ENCODE measurements at regions of chr4 and their contacts with region 1.

Region 1: GRCh38 chr4:74320559-74321118 is 12.4 kb downstream of the EPGN start:
- DNase-seq: peak; percentile 98
- ATAC-seq: peak; percentile 95
- H3K4me3 ChIP-seq: peak overlapping the region; percentile 10 to 41; a peak in 3 of 4 replicates
- H3K27ac ChIP-seq: peak overlapping the region; percentile 58
- H3K4me1 ChIP-seq: peaks cover 29 to 61% of the 10 kb centered on the region in 2 experiments
- H3K27me3 ChIP-seq: no peaks in the 10 kb centered on the region
- CTCF ChIP-seq: peak; percentile 59 to 86 (median 71)
- POLR2A ChIP-seq: no peak
- RAD21 ChIP-seq: peak; percentile 96

Region 2: DNA sequence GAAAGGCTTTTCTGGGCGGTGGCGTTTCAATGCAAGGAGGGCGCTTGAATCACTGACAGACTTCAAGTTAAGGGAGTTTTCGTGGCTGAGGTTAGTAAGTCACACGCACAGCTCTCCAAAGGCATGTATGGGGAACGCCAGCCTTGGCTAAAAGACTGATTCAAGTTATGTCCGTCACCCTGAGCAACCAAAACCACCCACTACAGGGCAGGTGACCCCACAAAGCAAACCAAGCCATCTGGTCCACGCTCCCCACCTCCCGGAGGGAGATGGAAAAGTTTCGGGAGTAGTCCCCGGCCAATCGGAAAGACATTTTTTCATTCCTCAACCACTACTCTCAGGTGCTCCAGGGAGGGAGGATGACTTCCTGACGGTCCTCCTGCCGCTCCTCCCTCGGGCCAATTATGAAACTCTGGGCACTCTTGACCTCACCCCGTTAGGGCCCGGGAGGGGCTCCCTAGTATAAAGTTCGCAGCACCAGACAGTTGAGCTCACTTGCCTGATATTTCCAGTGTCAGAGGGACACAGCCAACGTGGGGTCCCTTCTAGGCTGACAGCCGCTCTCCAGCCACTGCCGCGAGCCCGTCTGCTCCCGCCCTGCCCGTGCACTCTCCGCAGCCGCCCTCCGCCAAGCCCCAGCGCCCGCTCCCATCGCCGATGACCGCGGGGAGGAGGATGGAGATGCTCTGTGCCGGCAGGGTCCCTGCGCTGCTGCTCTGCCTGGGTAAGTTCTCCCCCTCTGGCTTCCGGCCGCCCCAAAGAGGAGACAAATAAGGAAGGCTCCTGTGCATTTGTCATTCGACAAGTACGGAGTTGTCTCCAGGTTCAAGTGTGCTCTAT is 44.2 kb after region 1 on chr4 and contains the start of gene EREG:
- CTCF ChIA-PET with region 1: no interaction called
- POLR2A ChIA-PET with region 1: interaction called, 17 read pairs
- RAD21 ChIA-PET with region 1: interaction called, 3 to 4 read pairs
- intact Hi-C with region 1: loop called (anchors 2 kb)
- DNase-seq: peak; percentile 74
- ATAC-seq: peak; percentile 71
- H3K4me3 ChIP-seq: peak within 1 kb of the TSS; percentile 76 to 91
- H3K27ac ChIP-seq: peak within 1 kb of the TSS; percentile 94
- H3K4me1 ChIP-seq: peaks cover 50 to 89% of the 10 kb centered on the region in 2 experiments
- H3K27me3 ChIP-seq: no peaks in the 10 kb centered on the region
- CTCF ChIP-seq: no peak
- POLR2A ChIP-seq: peak; percentile 76
- RAD21 ChIP-seq: no peak
- total RNA-seq, gene EREG: 498 TPM

Region 3: GRCh38 chr4:74397748-74398426 is 77.2 kb after region 1 on chr4:
- CTCF ChIA-PET with region 1: no interaction called
- POLR2A ChIA-PET with region 1: no interaction called
- RAD21 ChIA-PET with region 1: no interaction called
- intact Hi-C with region 1: no loop called
- DNase-seq: no peak
- ATAC-seq: no peak
- H3K4me3 ChIP-seq: no peak overlapping the region
- H3K27ac ChIP-seq: peak overlapping the region; percentile 15; the same call in 1 of the 2 replicates
- H3K4me1 ChIP-seq: peaks cover 26 to 55% of the 10 kb centered on the region in 2 experiments
- H3K27me3 ChIP-seq: no peaks in the 10 kb centered on the region
- CTCF ChIP-seq: no peak
- POLR2A ChIP-seq: no peak
- RAD21 ChIP-seq: no peak

Region 4: DNA sequence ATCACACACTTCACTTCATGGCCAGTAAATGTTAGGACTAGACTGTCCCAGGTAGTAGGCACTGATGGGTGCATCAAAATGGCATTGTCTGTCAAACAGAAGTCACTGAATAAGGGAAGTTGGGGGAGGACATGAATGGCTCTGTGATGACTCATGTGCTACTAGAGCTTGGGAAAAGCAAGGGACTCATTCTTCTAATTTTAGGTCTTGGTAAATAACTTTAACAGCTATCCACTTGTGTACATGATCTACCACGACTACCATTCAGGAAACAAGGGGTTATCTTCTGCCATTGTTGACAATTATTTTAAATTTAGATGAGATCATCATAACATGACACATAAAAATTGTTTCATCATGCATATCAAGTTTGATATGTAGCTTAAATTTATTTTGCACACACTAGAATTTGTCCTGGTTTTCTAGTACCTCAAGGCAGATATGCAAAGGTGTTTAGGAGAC is 130.6 kb after region 1 on chr4:
- CTCF ChIA-PET with region 1: no interaction called
- POLR2A ChIA-PET with region 1: interaction called, 6 read pairs
- RAD21 ChIA-PET with region 1: no interaction called
- intact Hi-C with region 1: loop called (anchors 2 kb)
- DNase-seq: no peak
- ATAC-seq: peak; percentile 48
- H3K4me3 ChIP-seq: no peak overlapping the region; a peak in 1 of 4 replicates
- H3K27ac ChIP-seq: peak overlapping the region; percentile 85; the same call in 1 of the 2 replicates
- H3K4me1 ChIP-seq: peaks cover 86 to 99% of the 10 kb centered on the region in 2 experiments
- H3K27me3 ChIP-seq: no peaks in the 10 kb centered on the region
- CTCF ChIP-seq: no peak
- POLR2A ChIP-seq: no peak
- RAD21 ChIP-seq: 0 out of 2 replicates have a peak, but pooled peaks have one; percentile 7

Region 5: GRCh38 chr4:74793757-74794340 is 473.2 kb after region 1 on chr4:
- CTCF ChIA-PET with region 1: interaction called, 4 read pairs
- POLR2A ChIA-PET with region 1: no interaction called
- RAD21 ChIA-PET with region 1: no interaction called
- intact Hi-C with region 1: loop called (anchors 5 kb)
- DNase-seq: no peak
- ATAC-seq: peak; percentile 83
- H3K4me3 ChIP-seq: peak overlapping the region; percentile 61 to 69
- H3K27ac ChIP-seq: peak overlapping the region; percentile 84
- H3K4me1 ChIP-seq: peaks cover 9 to 19% of the 10 kb centered on the region in 2 experiments
- H3K27me3 ChIP-seq: no peaks in the 10 kb centered on the region
- CTCF ChIP-seq: peak; percentile 76 to 82 (median 77)
- POLR2A ChIP-seq: peak; percentile 27
- RAD21 ChIP-seq: peak; percentile 36; the same call in 1 of the 2 replicates